ENCODE measurements at regions of chr2 and their contacts with region 1.

Region 1: DNA sequence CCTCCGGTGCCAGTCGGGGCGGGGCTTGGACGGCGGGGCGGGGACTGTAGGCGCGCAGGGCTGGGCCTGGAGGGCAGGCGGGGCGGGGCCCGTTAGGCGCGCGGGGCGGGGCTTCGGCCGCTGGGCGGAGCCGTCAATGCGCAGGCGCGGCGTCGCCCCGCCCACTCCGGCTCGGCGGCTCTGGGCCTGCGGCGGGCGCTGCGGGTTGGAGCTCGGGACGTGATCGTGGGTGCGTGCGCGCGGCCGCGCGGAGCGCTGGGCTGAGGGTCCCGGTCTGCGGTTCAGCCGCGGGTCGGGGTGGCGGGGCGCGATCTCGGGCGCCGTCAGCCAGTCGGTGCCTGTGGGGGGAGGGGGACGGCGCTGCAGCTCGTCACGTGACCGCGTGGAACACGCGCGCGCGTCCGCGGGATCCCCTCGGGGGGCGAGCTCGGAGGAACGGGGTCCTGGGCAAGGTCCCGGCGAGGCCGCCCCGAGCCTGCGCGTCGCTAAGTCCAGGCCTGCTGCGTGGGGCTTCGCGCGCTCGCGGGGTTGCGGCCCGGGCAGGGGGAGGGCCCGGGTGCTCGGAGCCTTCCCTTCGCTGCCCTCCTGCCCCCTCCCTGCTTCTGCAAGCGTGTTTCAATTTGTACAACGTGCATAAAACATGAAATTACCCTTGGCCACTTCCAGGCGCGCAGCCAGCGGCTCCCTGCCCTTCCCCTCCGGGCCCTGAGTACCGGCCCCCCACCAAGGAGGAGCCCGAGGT is at the start of gene D2HGDH:
- DNase-seq: peak; percentile 86
- ATAC-seq: peak; percentile 87
- H3K4me3 ChIP-seq: peak within 1 kb of the TSS; percentile 78
- H3K27ac ChIP-seq: peak within 1 kb of the TSS; percentile 60
- H3K4me1 ChIP-seq: peaks cover 20% of the 10 kb centered on the region
- H3K27me3 ChIP-seq: no peaks in the 10 kb centered on the region
- CTCF ChIP-seq: no peak
- total RNA-seq, gene D2HGDH: 28.5 and 51.2 TPM in 2 replicates

Region 2: DNA sequence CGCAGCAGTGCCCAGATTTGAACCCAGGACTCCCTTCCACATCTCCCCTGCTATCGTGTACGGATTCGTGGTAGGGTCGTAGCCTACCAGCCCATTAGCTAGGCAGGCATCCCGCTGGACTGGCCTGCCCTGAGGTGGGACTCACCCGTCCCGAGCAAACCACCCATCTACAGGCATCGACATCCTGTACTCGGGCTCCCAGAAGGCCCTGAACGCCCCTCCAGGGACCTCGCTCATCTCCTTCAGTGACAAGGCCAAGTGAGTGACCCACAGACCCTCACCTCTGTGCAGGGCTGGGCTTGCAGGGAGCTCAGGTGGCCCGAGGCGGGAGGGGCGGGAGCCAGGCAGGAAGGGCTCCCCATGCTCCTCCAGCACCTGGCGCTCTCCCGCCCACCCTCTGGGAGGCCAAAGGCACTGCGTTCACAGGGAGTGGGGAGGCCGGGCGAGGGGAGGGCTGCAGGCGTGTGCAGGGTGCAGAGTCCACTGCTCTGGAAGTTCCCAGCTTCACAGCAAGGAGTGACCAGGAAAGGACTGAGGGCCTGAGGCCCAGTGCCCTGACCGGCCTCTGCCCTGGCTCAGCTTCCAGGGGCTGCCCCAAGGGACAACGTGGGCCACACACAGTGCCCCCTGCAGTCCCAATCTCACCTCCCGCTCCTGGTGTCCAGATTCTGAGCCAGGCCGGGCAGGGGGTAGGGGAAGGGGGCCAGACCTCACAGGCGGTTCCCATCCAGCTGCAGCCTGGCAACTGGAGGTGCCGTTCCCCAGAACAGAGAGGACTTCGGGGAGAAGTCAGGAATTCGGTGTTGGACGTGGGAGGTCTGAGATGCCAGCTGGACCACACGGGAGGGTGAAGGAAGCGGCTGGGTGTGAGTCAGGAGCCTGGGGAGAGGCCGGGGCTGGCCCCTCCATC is 860.6 kb before region 1 on chr2:
- CTCF ChIA-PET with region 1: no interaction called
- POLR2A ChIA-PET with region 1: no interaction called
- intact Hi-C with region 1: no loop called
- DNase-seq: no peak
- ATAC-seq: no peak
- H3K4me3 ChIP-seq: no peak overlapping the region
- H3K27ac ChIP-seq: no peak overlapping the region
- H3K4me1 ChIP-seq: no peaks in the 10 kb centered on the region
- H3K27me3 ChIP-seq: no peaks in the 10 kb centered on the region; the same call in none of the 2 replicates
- CTCF ChIP-seq: no peak

Region 3: GRCh38 chr2:241859436-241860183 is 125.0 kb after region 1 on chr2:
- CTCF ChIA-PET with region 1: no interaction called
- POLR2A ChIA-PET with region 1: no interaction called
- intact Hi-C with region 1: loop called (anchors 10 kb)
- DNase-seq: no peak
- ATAC-seq: peak; percentile 70
- H3K4me3 ChIP-seq: peak overlapping the region; percentile 55
- H3K27ac ChIP-seq: no peak overlapping the region
- H3K4me1 ChIP-seq: no peaks in the 10 kb centered on the region
- H3K27me3 ChIP-seq: no peaks in the 10 kb centered on the region
- CTCF ChIP-seq: peak; percentile 41; the same call in 1 of the 2 replicates

Measured in PC-3 (cell line).